H1 (cell line): ENCODE measurements at regions of chr12 and their contacts with region 1.

Region 1: DNA sequence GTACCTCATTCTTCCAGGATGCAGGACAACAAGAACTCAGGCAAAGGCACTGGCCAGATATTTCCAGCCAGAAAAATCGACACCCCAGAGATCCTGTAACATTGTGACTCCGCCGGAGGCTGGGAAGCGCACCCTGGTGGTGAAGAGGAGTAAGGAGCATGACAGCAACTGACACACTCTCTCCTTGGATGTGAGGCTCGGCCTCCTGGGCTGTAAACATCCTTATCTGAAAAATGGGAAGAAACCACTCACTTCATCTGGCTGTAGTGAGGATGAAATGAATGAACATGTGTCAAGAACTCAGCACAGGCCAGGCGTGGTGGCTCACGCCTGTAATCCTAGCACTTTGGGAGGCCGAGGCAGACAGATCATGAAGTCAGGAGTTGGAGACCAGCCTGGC is 27.5 kb downstream of the TCHP start:
- DNase-seq: peak in 1 of 2 experiments; percentile 62
- H3K4me3 ChIP-seq: no peak overlapping the region
- H3K27ac ChIP-seq: no peak overlapping the region
- H3K4me1 ChIP-seq: no peaks in the 10 kb centered on the region; a peak in 1 of 7 replicates
- H3K27me3 ChIP-seq: no peaks in the 10 kb centered on the region
- CTCF ChIP-seq: peak; percentile 72 to 94 (median 91)
- EP300 ChIP-seq: no peak
- POLR2A ChIP-seq: no peak
- RAD21 ChIP-seq: peak; percentile 62 to 66

Region 2: GRCh38 chr12:109786799-109787198 is 140.8 kb before region 1 on chr12:
- CTCF ChIA-PET with region 1: no interaction called
- POLR2A ChIA-PET with region 1: no interaction called
- DNase-seq: no peak
- H3K4me3 ChIP-seq: no peak overlapping the region
- H3K27ac ChIP-seq: no peak overlapping the region
- H3K4me1 ChIP-seq: no peaks in the 10 kb centered on the region
- H3K27me3 ChIP-seq: no peaks in the 10 kb centered on the region
- CTCF ChIP-seq: no peak
- EP300 ChIP-seq: no peak
- POLR2A ChIP-seq: no peak
- RAD21 ChIP-seq: no peak

Region 3: GRCh38 chr12:109797905-109798669 is 129.5 kb before region 1 on chr12:
- CTCF ChIA-PET with region 1: no interaction called
- POLR2A ChIA-PET with region 1: no interaction called
- DNase-seq: peak in 1 of 2 experiments; percentile 67
- H3K4me3 ChIP-seq: no peak overlapping the region
- H3K27ac ChIP-seq: no peak overlapping the region
- H3K4me1 ChIP-seq: no peaks in the 10 kb centered on the region; a peak in 1 of 7 replicates
- H3K27me3 ChIP-seq: no peaks in the 10 kb centered on the region
- CTCF ChIP-seq: peak; percentile 38 to 60 (median 50)
- EP300 ChIP-seq: no peak
- POLR2A ChIP-seq: no peak
- RAD21 ChIP-seq: peak; percentile 18 to 45; a peak in 3 of 4 replicates

Region 4: DNA sequence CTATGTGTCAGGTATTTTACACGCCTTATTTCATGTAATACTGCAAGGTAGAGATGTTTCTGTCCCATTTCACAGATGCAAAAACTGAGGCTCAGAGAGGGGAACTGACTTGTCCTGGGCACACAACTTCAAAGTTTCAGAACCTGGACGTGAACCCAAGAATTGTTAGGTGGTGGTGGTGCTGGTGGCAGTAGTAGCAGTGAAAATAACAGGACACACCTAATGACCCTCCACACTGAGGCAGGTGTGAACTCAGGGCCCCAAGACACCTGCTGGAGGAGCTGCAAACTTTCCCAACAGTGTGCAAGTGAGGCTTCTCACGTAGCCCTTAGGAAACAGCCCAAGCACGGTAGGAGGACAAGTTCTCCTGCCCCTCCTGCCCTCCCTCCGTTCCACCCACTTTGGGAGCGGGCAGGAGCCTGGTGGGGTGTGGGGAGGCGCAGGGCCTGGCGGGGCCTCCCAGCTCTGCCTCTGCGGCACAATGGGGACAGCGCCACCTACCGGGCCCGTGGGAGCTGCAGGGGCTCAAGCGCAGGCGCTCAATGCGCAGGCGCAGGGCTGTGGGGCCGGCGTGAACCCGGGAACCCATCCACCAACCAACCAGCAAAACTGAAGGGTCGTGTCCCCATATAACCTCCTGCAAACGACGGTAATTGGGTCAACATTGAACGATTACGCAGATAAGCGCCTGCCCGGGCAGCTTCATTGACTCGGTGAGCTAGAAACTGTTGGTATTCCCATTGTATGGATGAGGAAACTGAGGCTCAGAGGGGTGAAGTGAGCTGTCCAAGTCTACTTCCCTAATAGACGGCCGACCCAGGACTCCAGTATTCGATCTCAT is 82.4 kb before region 1 on chr12:
- CTCF ChIA-PET with region 1: interaction called, 11 read pairs
- POLR2A ChIA-PET with region 1: no interaction called
- DNase-seq: peak; percentile 69 to 99
- H3K4me3 ChIP-seq: peak overlapping the region in 1 of 4 experiments; percentile 43; a peak in 2 of 8 replicates
- H3K27ac ChIP-seq: no peak overlapping the region
- H3K4me1 ChIP-seq: peaks cover 0 to 4% (median 2%) of the 10 kb centered on the region in 4 experiments; a peak in 5 of 7 replicates
- H3K27me3 ChIP-seq: no peaks in the 10 kb centered on the region
- CTCF ChIP-seq: peak; percentile 95 to 96 (median 95)
- EP300 ChIP-seq: no peak; a peak in 1 of 3 replicates
- POLR2A ChIP-seq: no peak
- RAD21 ChIP-seq: peak; percentile 74 to 83

Region 5: GRCh38 chr12:109899783-109900751 is 27.6 kb before region 1 on chr12 and contains the start of gene TCHP:
- CTCF ChIA-PET with region 1: interaction called, 10 read pairs
- POLR2A ChIA-PET with region 1: interaction called, 3 read pairs
- DNase-seq: peak; percentile 34 to 76
- H3K4me3 ChIP-seq: peak within 1 kb of the TSS; percentile 45 to 75 (median 66)
- H3K27ac ChIP-seq: no peak within 1 kb of the TSS
- H3K4me1 ChIP-seq: peaks cover 0 to 10% (median 2%) of the 10 kb centered on the region in 4 experiments; a peak in 3 of 7 replicates
- H3K27me3 ChIP-seq: peaks cover 49 to 91% (median 87%) of the 10 kb centered on the region in 4 experiments
- CTCF ChIP-seq: no peak
- EP300 ChIP-seq: no peak
- POLR2A ChIP-seq: no peak
- RAD21 ChIP-seq: no peak
- total RNA-seq, gene TCHP: 4.5 TPM in 2 replicates

Region 6: GRCh38 chr12:109910969-109911348 is 16.7 kb before region 1 on chr12:
- CTCF ChIA-PET with region 1: interaction called, 114 read pairs
- POLR2A ChIA-PET with region 1: no interaction called
- DNase-seq: peak; percentile 60 to 87
- H3K4me3 ChIP-seq: no peak overlapping the region
- H3K27ac ChIP-seq: no peak overlapping the region
- H3K4me1 ChIP-seq: no peaks in the 10 kb centered on the region; a peak in 1 of 7 replicates
- H3K27me3 ChIP-seq: peaks cover 0 to 17% (median 7%) of the 10 kb centered on the region in 4 experiments; a peak in 3 of 7 replicates
- CTCF ChIP-seq: peak; percentile 99 to 100 (median 99)
- EP300 ChIP-seq: no peak
- POLR2A ChIP-seq: no peak
- RAD21 ChIP-seq: peak; percentile 72 to 83

Region 7: GRCh38 chr12:109944561-109945359 is 17.1 kb after region 1 on chr12:
- CTCF ChIA-PET with region 1: interaction called, 12 read pairs
- POLR2A ChIA-PET with region 1: interaction called, 4 read pairs
- DNase-seq: peak; percentile 72 to 73
- H3K4me3 ChIP-seq: peak overlapping the region in 1 of 4 experiments; percentile 31; a peak in 1 of 8 replicates
- H3K27ac ChIP-seq: no peak overlapping the region
- H3K4me1 ChIP-seq: peaks cover 7 to 12% (median 8%) of the 10 kb centered on the region in 4 experiments
- H3K27me3 ChIP-seq: no peaks in the 10 kb centered on the region
- CTCF ChIP-seq: peak; percentile 34 to 48 (median 35)
- EP300 ChIP-seq: no peak
- POLR2A ChIP-seq: peak in 1 of 2 experiments; percentile 46; a peak in 1 of 3 replicates
- RAD21 ChIP-seq: peak; percentile 27 to 40; a peak in 2 of 4 replicates

Region 8: GRCh38 chr12:110065540-110065939 is 137.9 kb after region 1 on chr12:
- CTCF ChIA-PET with region 1: no interaction called
- POLR2A ChIA-PET with region 1: no interaction called
- DNase-seq: no peak
- H3K4me3 ChIP-seq: no peak overlapping the region
- H3K27ac ChIP-seq: no peak overlapping the region
- H3K4me1 ChIP-seq: no peaks in the 10 kb centered on the region
- H3K27me3 ChIP-seq: no peaks in the 10 kb centered on the region
- CTCF ChIP-seq: no peak
- EP300 ChIP-seq: no peak
- POLR2A ChIP-seq: no peak
- RAD21 ChIP-seq: no peak